ENCODE measurements at regions of chr12 and their contacts with region 1.

Region 1: DNA sequence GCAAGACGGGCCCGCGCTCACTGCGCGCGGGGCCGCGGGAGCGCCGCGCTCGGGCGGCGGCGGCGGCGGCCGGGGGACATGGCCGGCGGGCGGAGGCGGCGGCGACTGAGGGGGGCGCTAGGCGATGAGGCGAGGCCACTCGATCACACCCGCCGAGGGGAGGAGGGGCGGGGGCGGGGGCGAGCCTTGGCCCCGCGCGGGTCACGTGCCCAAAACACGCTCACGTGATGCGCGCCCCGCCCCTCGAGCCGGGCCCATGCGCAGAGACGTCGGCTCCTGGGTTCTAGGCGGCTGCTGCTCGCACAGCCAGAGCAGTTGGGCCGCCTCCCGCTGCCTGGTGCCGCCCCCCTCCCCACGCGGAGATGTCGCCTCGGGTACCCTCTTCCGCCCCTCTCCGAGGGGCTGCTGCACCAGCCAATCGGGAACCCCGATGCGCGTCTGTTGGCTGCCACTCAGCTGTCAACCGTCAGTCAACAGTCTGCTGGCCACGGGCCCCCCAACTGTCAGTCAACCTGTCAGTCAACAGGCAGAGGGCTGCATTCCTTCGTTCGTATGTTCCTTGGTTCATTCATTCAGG is at the start of gene SPPL3:
- DNase-seq: peak; percentile 86
- H3K4me3 ChIP-seq: peak within 1 kb of the TSS; percentile 45 to 92 (median 69)
- H3K27ac ChIP-seq: no peak within 1 kb of the TSS
- H3K4me1 ChIP-seq: peaks cover 9% of the 10 kb centered on the region
- H3K27me3 ChIP-seq: no peaks in the 10 kb centered on the region
- CTCF ChIP-seq: no peak
- POLR2A ChIP-seq: peak; percentile 67
- total RNA-seq, gene SPPL3: 38.2 and 53.0 TPM in 2 replicates

Region 2: GRCh38 chr12:120725659-120726509 is 178.4 kb before region 1 on chr12 and contains the start of gene ACADS:
- CTCF ChIA-PET with region 1: no interaction called
- POLR2A ChIA-PET with region 1: no interaction called
- dilution Hi-C with region 1: no loop called
- intact Hi-C with region 1: loop called (anchors 1 kb)
- DNase-seq: peak; percentile 82
- H3K4me3 ChIP-seq: peak within 1 kb of the TSS; percentile 43 to 63 (median 56)
- H3K27ac ChIP-seq: peak within 1 kb of the TSS; percentile 21
- H3K4me1 ChIP-seq: peaks cover 10% of the 10 kb centered on the region
- H3K27me3 ChIP-seq: no peaks in the 10 kb centered on the region
- CTCF ChIP-seq: no peak
- POLR2A ChIP-seq: peak; percentile 47
- total RNA-seq, gene ACADS: 8.2 and 9.5 TPM in 2 replicates

Region 3: GRCh38 chr12:120783197-120783596 is 121.1 kb before region 1 on chr12:
- CTCF ChIA-PET with region 1: no interaction called
- POLR2A ChIA-PET with region 1: no interaction called
- dilution Hi-C with region 1: no loop called
- intact Hi-C with region 1: loop called (anchors 1 kb)
- DNase-seq: peak; percentile 87
- H3K4me3 ChIP-seq: peak overlapping the region in 1 of 3 experiments; percentile 27
- H3K27ac ChIP-seq: peak overlapping the region; percentile 90
- H3K4me1 ChIP-seq: peaks cover 24% of the 10 kb centered on the region
- H3K27me3 ChIP-seq: no peaks in the 10 kb centered on the region
- CTCF ChIP-seq: no peak
- POLR2A ChIP-seq: peak; percentile 46

Measured in endothelial cell of umbilical vein (primary cell).